Activated T-helper 2 cell treated with anti-CD3 and anti-CD28 coated beads, Interferon-gamma antibody, Interleukin-2, Interleukin-4, amounts not matched to agents 10 μg/mL and 5 μg/mL and 100 μg/mL, durations not matched to agents 14 hours and 24 hours and 36 hours (primary cell): ENCODE measurements at regions of chr9 and their contacts with region 1.

Region 1: GRCh38 chr9:98255578-98256296 is at the start of gene TBC1D2:
- DNase-seq: peak; percentile 96
- H3K4me3 Mint-ChIP-seq: peak within 1 kb of the TSS; percentile 97
- H3K27ac Mint-ChIP-seq: peak within 1 kb of the TSS; percentile 94
- H3K4me1 Mint-ChIP-seq: peaks cover 23% of the 10 kb centered on the region
- H3K27me3 Mint-ChIP-seq: peaks cover 12% of the 10 kb centered on the region
- total RNA-seq, gene TBC1D2: 1.3 and 1.5 TPM in 2 replicates

Region 2: GRCh38 chr9:97906236-97906831 is 349.4 kb before region 1 on chr9:
- intact Hi-C with region 1: loop called (anchors 5 kb)
- DNase-seq: no peak
- H3K4me3 Mint-ChIP-seq: peak overlapping the region; percentile 69
- H3K27ac Mint-ChIP-seq: peak overlapping the region; percentile 96
- H3K4me1 Mint-ChIP-seq: peaks cover 56% of the 10 kb centered on the region
- H3K27me3 Mint-ChIP-seq: no peaks in the 10 kb centered on the region

Region 3: GRCh38 chr9:98192503-98193335 is 63.0 kb before region 1 on chr9 and contains the start of gene CORO2A:
- intact Hi-C with region 1: loop called (anchors 2 kb)
- DNase-seq: peak; percentile 59
- H3K4me3 Mint-ChIP-seq: peak within 1 kb of the TSS; percentile 83
- H3K27ac Mint-ChIP-seq: no peak within 1 kb of the TSS
- H3K4me1 Mint-ChIP-seq: peaks cover 9% of the 10 kb centered on the region
- H3K27me3 Mint-ChIP-seq: peaks cover 14% of the 10 kb centered on the region
- total RNA-seq, gene CORO2A: 0.87 and 0.96 TPM in 2 replicates

Region 4: GRCh38 chr9:98558575-98558974 is 302.8 kb after region 1 on chr9:
- intact Hi-C with region 1: no loop called
- DNase-seq: no peak
- H3K4me3 Mint-ChIP-seq: no peak overlapping the region
- H3K27ac Mint-ChIP-seq: no peak overlapping the region
- H3K4me1 Mint-ChIP-seq: no peaks in the 10 kb centered on the region
- H3K27me3 Mint-ChIP-seq: peaks cover 15% of the 10 kb centered on the region